Testis (tissue), 5 donors: ENCODE measurements at regions of chr17 and their contacts with region 1.

Region 1: DNA sequence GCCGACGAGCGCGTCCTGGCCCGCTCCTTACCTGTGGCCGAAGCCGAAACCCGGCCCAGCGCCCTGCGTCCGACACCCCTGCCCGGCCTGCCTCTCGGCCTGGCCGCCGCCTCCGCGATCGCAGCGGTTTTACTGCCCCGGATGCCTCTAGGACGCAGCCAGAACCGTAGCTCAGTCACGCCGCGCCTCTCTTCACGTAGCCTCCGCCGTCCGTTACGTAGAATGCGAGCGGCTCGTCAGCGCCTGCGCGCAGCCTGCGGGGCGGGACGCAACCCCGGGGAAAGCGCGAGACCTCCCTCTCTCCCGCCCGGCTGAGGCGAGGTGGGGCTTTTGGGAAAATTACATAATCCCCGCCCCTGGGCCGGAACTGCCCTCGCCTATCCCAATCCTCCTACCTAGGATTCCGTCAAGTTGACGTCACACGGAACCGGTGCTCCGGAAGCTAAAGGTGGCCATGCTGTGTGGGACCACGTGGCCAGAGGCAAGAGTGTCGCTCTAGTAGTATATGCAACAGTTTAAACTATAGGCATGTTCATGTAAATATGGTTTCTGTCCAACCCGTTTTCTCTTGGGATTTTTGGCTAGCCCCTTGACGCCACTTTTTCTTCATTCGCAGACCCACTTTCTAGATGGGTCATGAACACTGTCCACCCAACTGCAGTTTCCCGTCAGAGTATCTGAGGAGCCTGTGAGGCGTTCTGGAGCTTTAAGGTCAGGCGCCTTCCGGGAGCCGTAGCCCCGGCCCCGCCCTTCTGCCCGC is at the start of gene CCDC47:
- DNase-seq: peak; percentile 99
- H3K4me3 ChIP-seq: peak within 1 kb of the TSS; percentile 78 to 99
- H3K27ac ChIP-seq: peak within 1 kb of the TSS; percentile 97 to 99
- H3K4me1 ChIP-seq: peaks cover 19% of the 10 kb centered on the region
- H3K27me3 ChIP-seq: no peaks in the 10 kb centered on the region
- CTCF ChIP-seq: no peak
- POLR2A ChIP-seq: peak; percentile 89
- total RNA-seq, gene CCDC47: 65.7 to 68.0 TPM

Region 2: DNA sequence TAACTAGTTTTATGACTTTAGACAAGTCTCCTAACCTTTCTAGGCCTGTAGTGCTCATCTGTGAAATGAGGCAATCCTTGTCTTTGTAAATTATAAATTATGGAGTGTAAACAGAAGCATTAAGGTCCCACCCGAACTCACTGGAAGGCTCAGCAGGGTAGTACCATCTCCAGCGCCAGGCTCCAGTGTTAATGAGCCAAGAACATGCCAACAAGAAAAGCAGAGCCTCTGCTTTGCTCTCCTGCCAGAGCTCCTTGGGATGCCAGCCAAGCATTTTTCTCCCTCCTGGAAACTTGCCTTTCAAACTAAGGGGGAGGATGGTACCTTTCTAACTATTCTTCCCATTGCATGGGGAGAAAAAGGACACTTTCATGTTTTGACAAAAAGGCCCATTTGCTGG is 88.5 kb before region 1 on chr17:
- intact Hi-C with region 1: no loop called
- DNase-seq: no peak
- H3K4me3 ChIP-seq: no peak overlapping the region
- H3K27ac ChIP-seq: no peak overlapping the region
- H3K4me1 ChIP-seq: no peaks in the 10 kb centered on the region
- H3K27me3 ChIP-seq: no peaks in the 10 kb centered on the region
- CTCF ChIP-seq: no peak
- POLR2A ChIP-seq: no peak

Region 3: DNA sequence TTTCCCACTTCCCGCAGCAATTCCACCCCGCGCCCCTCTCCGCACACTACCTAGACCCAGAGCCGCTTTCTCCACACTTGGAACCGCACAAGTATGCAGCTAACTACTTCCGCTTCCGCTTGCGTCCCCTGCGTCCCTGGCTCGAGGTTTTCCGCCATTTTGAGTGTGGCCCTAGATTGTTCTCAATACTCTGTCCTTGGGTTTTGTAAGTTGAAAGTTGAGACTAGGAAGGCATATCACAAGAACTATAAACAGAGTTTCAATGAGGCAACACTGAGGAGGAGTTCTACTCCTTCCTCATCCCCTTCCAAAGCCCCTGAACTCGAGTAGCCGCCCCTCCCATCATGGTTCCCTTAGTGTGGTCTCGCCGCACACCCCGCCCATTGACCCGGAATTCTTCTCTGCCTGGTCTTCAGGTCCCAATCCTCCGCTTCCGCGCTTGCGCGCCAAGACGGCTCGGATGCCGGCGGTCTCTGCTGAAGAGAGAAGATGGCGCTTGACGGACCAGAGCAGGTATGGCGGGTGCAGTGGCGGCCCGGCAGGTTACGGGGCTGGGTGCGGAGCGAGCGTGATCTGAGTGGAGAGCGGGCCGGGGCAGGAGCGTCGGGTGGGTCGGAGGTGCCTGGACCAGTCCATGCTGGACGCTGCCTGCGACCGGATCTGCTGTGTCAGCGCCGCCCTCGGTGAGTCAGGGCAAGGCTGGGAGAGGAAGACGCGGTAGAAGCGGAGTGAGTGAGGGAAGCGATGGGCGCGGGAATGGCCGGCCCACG is 53.6 kb after region 1 on chr17 and contains the starts of genes FTSJ3 and PSMC5:
- intact Hi-C with region 1: loop called (anchors 10 kb)
- DNase-seq: peak; percentile 99
- H3K4me3 ChIP-seq: peak within 1 kb of the TSS; percentile 84 to 94
- H3K27ac ChIP-seq: peak within 1 kb of the TSS; percentile 93 to 96
- H3K4me1 ChIP-seq: peaks cover 8% of the 10 kb centered on the region
- H3K27me3 ChIP-seq: no peaks in the 10 kb centered on the region
- CTCF ChIP-seq: peak in 2 of 3 experiments; percentile 24 to 27
- POLR2A ChIP-seq: no peak
- total RNA-seq, gene FTSJ3: 47.2 to 59.7 TPM
- total RNA-seq, gene PSMC5: 121 to 145 TPM